ENCODE measurements at regions of chr3 and their contacts with region 1.

Region 1: GRCh38 chr3:69161587-69162307 is 39.4 kb upstream of the LMOD3 start:
- DNase-seq: no peak
- H3K4me3 ChIP-seq: no peak overlapping the region
- H3K27ac ChIP-seq: no peak overlapping the region
- H3K4me1 ChIP-seq: no peaks in the 10 kb centered on the region; a peak in 1 of 7 replicates
- H3K27me3 ChIP-seq: no peaks in the 10 kb centered on the region
- CTCF ChIP-seq: peak in 2 of 3 experiments; percentile 83 to 84; a peak in 3 of 4 replicates
- EP300 ChIP-seq: no peak
- POLR2A ChIP-seq: no peak
- RAD21 ChIP-seq: peak; percentile 96 to 98

Region 2: DNA sequence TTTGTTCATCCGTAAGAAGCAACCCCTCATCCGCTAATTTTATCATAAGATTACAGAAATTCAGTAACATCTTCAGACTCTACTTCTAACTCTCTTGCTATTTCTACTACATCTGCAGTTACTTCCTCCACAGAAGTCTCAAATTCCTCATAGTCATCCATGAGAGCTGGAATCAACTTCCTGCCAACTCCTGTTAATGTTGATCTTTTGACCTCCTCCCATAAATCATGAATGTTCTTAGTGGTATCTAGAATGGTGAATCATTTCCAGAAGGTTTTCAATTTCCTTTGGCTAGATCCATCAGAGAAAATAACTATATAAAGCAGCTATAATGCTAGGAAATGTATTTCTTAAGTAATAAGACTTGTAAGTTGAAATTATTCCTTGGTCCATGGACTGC is 344.5 kb before region 1 on chr3:
- CTCF ChIA-PET with region 1: no interaction called
- POLR2A ChIA-PET with region 1: no interaction called
- DNase-seq: no peak
- H3K4me3 ChIP-seq: no peak overlapping the region
- H3K27ac ChIP-seq: no peak overlapping the region
- H3K4me1 ChIP-seq: no peaks in the 10 kb centered on the region; a peak in 1 of 7 replicates
- H3K27me3 ChIP-seq: no peaks in the 10 kb centered on the region
- CTCF ChIP-seq: no peak
- EP300 ChIP-seq: no peak
- POLR2A ChIP-seq: no peak
- RAD21 ChIP-seq: no peak

Region 3: GRCh38 chr3:68924897-68925296 is 236.8 kb before region 1 on chr3:
- CTCF ChIA-PET with region 1: no interaction called
- POLR2A ChIA-PET with region 1: no interaction called
- DNase-seq: no peak
- H3K4me3 ChIP-seq: no peak overlapping the region
- H3K27ac ChIP-seq: no peak overlapping the region
- H3K4me1 ChIP-seq: peaks cover 0 to 5% (median 4%) of the 10 kb centered on the region in 4 experiments; a peak in 3 of 7 replicates
- H3K27me3 ChIP-seq: peaks cover 0 to 4% (median 1%) of the 10 kb centered on the region in 4 experiments; a peak in 2 of 7 replicates
- CTCF ChIP-seq: no peak
- EP300 ChIP-seq: no peak
- POLR2A ChIP-seq: no peak
- RAD21 ChIP-seq: no peak

Region 4: GRCh38 chr3:68943753-68944500 is 217.8 kb before region 1 on chr3:
- CTCF ChIA-PET with region 1: no interaction called
- POLR2A ChIA-PET with region 1: no interaction called
- DNase-seq: no peak
- H3K4me3 ChIP-seq: no peak overlapping the region
- H3K27ac ChIP-seq: no peak overlapping the region
- H3K4me1 ChIP-seq: peaks cover 0 to 5% (median 0%) of the 10 kb centered on the region in 4 experiments; a peak in 2 of 7 replicates
- H3K27me3 ChIP-seq: no peaks in the 10 kb centered on the region
- CTCF ChIP-seq: no peak
- EP300 ChIP-seq: no peak
- POLR2A ChIP-seq: no peak
- RAD21 ChIP-seq: no peak

Region 5: DNA sequence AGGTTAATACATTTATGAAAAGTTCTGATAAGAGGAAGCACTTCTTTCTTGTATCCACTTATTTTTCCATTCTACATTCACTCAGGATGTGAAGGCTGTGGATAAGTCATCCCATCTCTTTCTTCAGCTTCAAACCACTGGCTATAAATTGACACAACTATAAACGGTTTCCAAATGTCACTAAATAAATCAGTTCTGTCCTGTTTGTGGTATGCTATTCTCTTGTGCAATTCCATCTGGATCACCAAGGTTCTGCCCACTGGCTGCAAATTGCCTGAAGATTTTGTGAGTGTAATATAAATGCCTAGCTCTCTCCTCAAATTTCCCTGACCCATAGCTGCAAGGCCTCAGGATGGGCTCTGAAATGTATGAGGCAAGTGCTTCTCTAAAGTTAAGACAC is 32.2 kb before region 1 on chr3:
- CTCF ChIA-PET with region 1: interaction called, 21 read pairs
- POLR2A ChIA-PET with region 1: no interaction called
- DNase-seq: no peak
- H3K4me3 ChIP-seq: no peak overlapping the region
- H3K27ac ChIP-seq: no peak overlapping the region
- H3K4me1 ChIP-seq: no peaks in the 10 kb centered on the region
- H3K27me3 ChIP-seq: no peaks in the 10 kb centered on the region
- CTCF ChIP-seq: no peak
- EP300 ChIP-seq: no peak
- POLR2A ChIP-seq: no peak
- RAD21 ChIP-seq: no peak

Region 6: GRCh38 chr3:69181592-69182211 is 20.0 kb after region 1 on chr3:
- CTCF ChIA-PET with region 1: interaction called, 56 read pairs
- POLR2A ChIA-PET with region 1: no interaction called
- DNase-seq: no peak
- H3K4me3 ChIP-seq: peak overlapping the region in 1 of 4 experiments; percentile 1; a peak in 1 of 8 replicates
- H3K27ac ChIP-seq: no peak overlapping the region
- H3K4me1 ChIP-seq: peaks cover 0 to 16% (median 11%) of the 10 kb centered on the region in 4 experiments
- H3K27me3 ChIP-seq: no peaks in the 10 kb centered on the region
- CTCF ChIP-seq: no peak
- EP300 ChIP-seq: no peak
- POLR2A ChIP-seq: no peak
- RAD21 ChIP-seq: no peak

Region 7: DNA sequence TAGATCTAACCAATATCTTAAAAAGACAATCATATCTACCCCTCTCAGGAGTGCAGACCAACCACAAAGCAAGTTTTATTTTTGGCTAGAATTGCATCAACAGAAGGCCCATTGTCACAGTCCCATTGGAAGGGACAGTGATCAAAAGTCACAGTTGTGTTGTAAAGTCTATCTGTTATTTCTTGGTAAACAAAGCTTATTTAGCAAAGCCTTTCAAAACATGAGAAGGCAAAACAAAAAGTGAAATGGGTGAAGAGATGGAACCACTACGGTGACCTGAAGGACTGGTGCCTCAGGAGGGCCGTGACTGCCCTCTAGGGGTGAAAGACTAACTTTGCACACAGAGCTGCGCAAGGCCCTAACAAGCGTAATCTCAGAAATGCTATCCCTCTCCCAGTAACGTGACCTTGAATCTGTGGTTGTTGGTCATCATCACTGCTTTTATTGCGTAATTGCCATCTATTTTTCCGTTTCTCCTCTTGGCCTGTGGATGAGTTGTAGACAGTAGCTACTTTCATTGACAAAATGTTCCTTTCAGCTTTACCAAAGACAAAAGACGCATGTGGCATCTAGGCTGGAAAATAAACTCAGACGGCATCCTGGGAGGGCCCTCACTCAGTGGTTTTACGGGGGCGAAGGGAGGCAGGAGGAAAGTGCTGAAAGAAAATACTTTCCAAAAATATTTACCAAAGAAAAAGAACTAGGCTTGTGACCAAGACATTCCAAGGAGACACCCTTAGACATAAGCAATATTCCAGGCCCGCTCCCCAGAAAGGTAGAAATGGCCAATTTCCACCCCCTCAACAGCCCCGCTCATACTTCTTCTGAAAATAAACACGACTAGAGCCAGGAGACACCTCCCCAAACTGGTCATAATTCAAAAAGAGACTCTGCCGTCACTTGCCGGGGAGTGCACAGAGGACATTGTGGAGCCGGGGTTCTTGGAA is 144.8 kb after region 1 on chr3:
- CTCF ChIA-PET with region 1: interaction called, 471 read pairs
- POLR2A ChIA-PET with region 1: no interaction called
- DNase-seq: peak in 1 of 2 experiments; percentile 63
- H3K4me3 ChIP-seq: no peak overlapping the region
- H3K27ac ChIP-seq: no peak overlapping the region
- H3K4me1 ChIP-seq: no peaks in the 10 kb centered on the region
- H3K27me3 ChIP-seq: no peaks in the 10 kb centered on the region
- CTCF ChIP-seq: peak; percentile 86 to 98 (median 91)
- EP300 ChIP-seq: no peak
- POLR2A ChIP-seq: no peak
- RAD21 ChIP-seq: peak; percentile 98 to 99

Region 8: DNA sequence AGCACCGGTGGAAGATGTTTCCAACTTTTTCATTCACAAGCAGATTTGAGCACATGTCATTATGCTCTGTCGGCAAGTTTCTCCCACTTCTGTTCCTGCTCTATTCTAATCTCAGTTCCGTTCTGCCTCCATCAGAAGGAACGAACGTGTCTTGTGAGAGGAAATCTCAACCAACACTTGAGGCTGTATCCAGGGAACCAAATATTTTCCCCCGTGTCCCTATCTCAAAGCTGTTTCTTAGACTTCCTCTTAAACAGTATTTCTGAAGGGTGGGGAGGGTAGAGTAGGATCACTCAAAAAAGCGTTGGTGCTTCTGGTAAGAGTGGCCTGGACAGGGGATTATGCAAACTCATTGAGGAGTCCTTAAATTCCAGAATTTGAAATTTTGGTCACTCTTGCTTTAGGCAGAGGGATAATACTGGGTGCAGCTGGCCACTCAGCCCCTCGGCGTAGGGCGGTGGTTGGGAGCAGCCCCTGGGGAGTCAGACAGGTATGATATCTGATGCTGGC is 169.2 kb after region 1 on chr3:
- CTCF ChIA-PET with region 1: interaction called, 11 read pairs
- POLR2A ChIA-PET with region 1: no interaction called
- DNase-seq: no peak
- H3K4me3 ChIP-seq: no peak overlapping the region
- H3K27ac ChIP-seq: no peak overlapping the region
- H3K4me1 ChIP-seq: no peaks in the 10 kb centered on the region
- H3K27me3 ChIP-seq: no peaks in the 10 kb centered on the region
- CTCF ChIP-seq: no peak
- EP300 ChIP-seq: no peak
- POLR2A ChIP-seq: no peak
- RAD21 ChIP-seq: no peak

Region 9: GRCh38 chr3:69410250-69410649 is 248.5 kb after region 1 on chr3:
- CTCF ChIA-PET with region 1: interaction called, 12 read pairs
- POLR2A ChIA-PET with region 1: no interaction called
- DNase-seq: peak in 1 of 2 experiments; percentile 76
- H3K4me3 ChIP-seq: no peak overlapping the region
- H3K27ac ChIP-seq: no peak overlapping the region
- H3K4me1 ChIP-seq: peaks cover 0 to 2% (median 0%) of the 10 kb centered on the region in 4 experiments; a peak in 2 of 7 replicates
- H3K27me3 ChIP-seq: no peaks in the 10 kb centered on the region
- CTCF ChIP-seq: peak; percentile 68 to 89 (median 72)
- EP300 ChIP-seq: no peak
- POLR2A ChIP-seq: no peak
- RAD21 ChIP-seq: peak; percentile 60 to 67

Measured in H1 (cell line).